Common myeloid progenitor, CD34-positive (primary cell): ENCODE measurements at regions of chr19 and their contacts with region 1.

Region 1: GRCh38 chr19:11293433-11294389 is 2.2 kb upstream of the TSPAN16 start:
- DNase-seq: peak; percentile 89 to 91 (median 90)
- H3K4me3 ChIP-seq: peak overlapping the region in 5 of 7 experiments; percentile 3 to 76 (median 53)
- H3K27ac ChIP-seq: no peak overlapping the region
- H3K4me1 ChIP-seq: peaks cover 2 to 23% (median 22%) of the 10 kb centered on the region in 4 experiments
- H3K27me3 ChIP-seq: peaks cover 0 to 4% (median 0%) of the 10 kb centered on the region in 5 experiments

Region 2: DNA sequence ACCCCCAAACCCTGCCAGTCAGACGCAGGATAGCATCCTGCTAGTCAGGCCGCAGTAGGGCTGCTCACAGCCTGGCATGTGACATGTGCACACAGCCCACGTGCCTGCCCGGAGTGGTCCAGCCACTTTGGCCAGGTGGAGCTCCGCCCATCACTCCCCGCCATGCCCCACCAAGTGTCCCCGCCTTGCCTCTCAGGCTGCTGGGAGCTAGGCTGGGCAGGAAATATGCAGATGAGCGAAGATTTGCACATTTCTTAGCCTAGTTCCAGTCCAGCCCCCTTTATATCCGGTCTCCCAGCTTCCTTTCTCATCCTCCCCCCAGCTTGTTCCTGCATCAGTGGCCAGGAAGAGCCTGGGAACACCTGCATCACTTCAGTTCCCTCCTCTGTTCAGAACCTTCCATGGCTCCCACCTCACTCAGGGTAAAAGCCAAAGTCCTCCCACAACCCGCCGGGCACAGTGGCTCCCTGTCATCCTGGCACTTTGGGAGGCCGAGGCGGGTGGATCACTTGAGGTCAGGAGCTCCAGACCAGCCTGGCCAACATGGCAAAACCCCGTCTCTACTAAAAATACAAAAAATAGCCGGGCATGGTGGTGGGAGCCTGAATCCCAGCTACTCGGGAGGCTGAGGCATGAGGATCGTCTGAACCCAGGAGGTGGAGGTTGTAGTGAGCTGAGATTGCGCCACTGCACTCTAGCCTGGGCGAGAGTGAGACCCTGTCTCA is 29.1 kb before region 1 on chr19:
- CTCF ChIA-PET with region 1: no interaction called
- POLR2A ChIA-PET with region 1: no interaction called
- DNase-seq: no peak
- H3K4me3 ChIP-seq: no peak overlapping the region
- H3K27ac ChIP-seq: no peak overlapping the region
- H3K4me1 ChIP-seq: peaks cover 0 to 26% (median 19%) of the 10 kb centered on the region in 4 experiments
- H3K27me3 ChIP-seq: peaks cover 0 to 21% (median 18%) of the 10 kb centered on the region in 5 experiments

Region 3: DNA sequence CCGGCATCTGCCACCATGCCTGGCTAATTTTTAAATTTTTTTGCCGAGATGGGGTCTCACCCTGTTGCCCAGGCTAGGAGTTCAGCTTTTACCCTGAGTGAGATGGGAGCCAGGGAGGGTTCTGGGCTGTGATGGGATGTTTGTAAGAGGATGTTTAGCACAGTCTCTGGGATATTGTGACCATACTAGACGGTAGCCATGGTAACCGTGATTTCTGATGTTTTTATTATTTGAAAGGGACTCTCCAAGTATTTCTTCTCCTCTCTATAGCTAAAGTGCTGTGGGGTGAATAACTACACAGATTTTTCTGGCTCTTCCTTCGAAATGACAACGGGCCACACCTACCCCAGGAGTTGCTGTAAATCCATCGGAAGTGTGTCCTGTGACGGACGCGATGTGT is 12.6 kb after region 1 on chr19:
- CTCF ChIA-PET with region 1: interaction called, 10 read pairs
- POLR2A ChIA-PET with region 1: no interaction called
- DNase-seq: peak in 2 of 3 donors; percentile 63 to 66
- H3K4me3 ChIP-seq: no peak overlapping the region
- H3K27ac ChIP-seq: no peak overlapping the region
- H3K4me1 ChIP-seq: no peaks in the 10 kb centered on the region
- H3K27me3 ChIP-seq: no peaks in the 10 kb centered on the region